ENCODE measurements at regions of chr15 and their contacts with region 1.

Region 1: GRCh38 chr15:51776952-51777574 is 25.7 kb downstream of the TMOD2 start:
- DNase-seq: peak; percentile 70
- CTCF ChIP-seq: peak; percentile 73

Region 2: DNA sequence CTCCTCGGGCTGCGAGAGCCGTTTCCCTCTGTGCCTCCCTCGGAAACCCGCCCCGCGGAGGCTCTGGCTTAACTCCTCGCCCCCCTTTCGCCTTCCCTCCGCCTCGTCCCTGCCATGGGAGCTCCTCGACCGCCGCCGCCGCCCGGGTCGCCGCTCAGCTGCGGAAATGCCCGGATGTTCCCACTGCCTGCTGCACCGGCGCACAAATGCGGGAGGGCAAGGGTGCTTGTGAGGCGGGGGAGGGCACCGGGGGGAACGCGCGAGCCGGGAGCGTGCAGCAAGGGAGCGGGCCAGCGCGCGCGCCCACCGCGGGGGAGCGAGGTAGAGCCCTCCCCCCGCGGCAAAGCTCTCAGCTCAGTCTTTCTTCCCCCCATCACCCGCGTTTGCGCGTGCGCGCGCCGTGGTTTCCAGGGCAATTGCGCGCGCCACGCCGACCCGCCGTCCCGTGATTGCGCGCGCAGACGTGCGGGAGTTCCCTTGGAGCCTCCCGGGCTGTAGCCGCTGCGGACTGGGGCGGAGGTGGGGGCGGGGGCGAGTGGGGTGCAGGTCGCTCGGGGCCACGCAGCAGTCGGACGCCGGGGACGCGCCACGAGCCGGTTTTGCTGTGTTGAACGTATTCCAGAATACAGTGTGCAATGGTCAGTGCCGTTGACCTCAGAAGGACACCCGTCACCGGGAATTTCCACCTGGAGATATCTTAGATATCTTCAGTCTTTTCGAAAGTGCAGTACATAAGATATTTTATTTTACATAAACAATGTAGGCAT is 154.3 kb before region 1 on chr15 and contains the start of gene DMXL2:
- CTCF ChIA-PET with region 1: interaction called, 18 read pairs
- POLR2A ChIA-PET with region 1: no interaction called
- DNase-seq: peak; percentile 79
- CTCF ChIP-seq: no peak

Region 3: GRCh38 chr15:51658670-51659069 is 118.4 kb before region 1 on chr15:
- CTCF ChIA-PET with region 1: interaction called, 45 read pairs
- POLR2A ChIA-PET with region 1: no interaction called
- DNase-seq: no peak
- CTCF ChIP-seq: no peak

Region 4: GRCh38 chr15:51681303-51681963 is 95.6 kb before region 1 on chr15 and contains the start of gene SCG3:
- CTCF ChIA-PET with region 1: interaction called, 13 read pairs
- POLR2A ChIA-PET with region 1: no interaction called
- DNase-seq: peak; percentile 55
- CTCF ChIP-seq: no peak

Region 5: DNA sequence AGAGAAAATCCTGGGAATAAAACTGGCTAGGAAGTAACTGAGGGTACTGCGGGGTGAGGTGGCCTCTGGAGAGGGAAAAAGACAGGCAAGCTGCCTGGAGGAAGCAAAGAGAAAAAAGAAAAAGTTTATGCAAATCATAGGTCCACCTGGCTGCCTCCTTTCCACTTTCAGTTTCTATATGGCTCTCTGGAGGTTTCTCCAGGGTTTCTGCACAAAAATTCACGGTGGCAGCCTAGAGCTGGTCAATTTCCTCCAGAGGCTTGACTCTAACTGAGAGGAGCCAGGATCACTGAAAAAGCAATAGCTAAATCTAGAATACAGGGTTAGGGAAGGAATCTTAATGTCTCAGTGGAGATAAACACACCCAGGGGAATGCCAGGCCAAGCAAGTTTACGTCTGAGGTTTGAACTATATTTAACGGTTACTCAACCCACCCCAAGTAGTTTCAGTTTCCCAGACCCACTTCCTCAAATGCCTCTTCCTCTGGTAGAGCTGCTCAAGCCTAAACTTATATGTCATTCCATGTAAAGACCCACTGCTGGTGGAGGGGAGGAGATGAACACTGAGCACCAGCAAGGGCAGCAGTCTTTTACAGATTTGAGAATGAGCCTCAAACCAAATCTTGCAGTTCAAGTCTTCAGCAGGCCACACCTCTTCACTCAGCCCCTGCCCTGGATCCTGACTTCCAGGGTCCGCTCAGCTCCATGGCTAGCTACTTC is 45.4 kb before region 1 on chr15:
- CTCF ChIA-PET with region 1: interaction called, 23 read pairs
- POLR2A ChIA-PET with region 1: no interaction called
- DNase-seq: peak; percentile 66
- CTCF ChIP-seq: no peak

Region 6: DNA sequence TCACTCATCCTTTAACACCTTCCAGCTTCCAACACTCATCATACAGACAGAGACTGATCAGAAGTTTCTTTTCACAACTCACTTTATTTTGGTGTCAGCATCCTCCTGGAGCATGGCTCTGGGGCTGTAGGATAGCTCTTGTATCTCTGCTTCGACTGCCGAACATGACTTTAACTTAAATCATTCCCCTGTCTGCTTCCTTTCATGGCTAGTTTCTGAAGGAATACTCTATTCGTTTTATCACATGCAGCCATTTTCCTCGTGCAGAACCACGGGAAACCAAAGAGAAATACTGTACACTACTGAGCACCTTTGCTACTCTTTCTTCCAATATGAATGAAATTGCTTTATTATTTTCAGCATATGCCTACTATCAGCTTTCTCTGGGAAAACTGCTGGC is 27.8 kb before region 1 on chr15:
- CTCF ChIA-PET with region 1: interaction called, 41 read pairs
- POLR2A ChIA-PET with region 1: no interaction called
- DNase-seq: no peak
- CTCF ChIP-seq: no peak

Region 7: DNA sequence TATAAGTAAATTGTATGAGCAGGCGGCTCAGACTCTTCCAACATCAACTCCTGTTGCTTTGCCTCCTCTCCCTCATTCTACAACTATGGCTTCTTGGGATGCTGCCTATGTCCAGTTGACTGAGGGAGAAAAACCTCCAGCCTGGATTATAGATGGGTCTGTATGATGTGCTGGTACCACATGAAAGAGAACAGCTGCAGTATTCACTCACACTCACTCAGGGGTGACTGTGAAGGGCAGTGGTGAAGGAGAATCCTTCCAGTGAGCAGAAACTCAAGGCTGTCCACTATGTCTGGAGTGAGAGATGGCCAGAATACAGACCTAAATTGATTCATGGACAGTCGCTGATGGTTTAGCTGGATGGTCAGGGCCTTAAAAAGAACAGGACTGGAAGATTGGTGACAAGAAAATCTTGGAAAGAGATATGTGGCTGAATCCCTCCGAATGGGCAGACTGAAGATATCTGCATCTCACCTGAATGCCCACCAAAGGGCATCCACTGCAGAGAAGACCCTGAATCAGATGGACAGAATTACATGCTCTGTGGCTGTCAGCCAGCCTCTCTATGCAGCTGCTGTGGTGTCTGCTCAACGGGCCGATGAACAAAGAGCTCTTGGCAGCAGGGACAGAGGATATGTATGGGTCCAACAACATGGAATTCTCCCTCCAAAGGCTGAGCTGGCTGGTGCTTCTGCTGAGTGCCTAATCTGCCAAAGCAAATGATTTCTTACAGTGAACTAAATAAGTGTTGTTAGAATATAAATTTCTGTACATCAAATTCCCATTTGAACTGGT is 337.4 kb after region 1 on chr15:
- CTCF ChIA-PET with region 1: no interaction called
- POLR2A ChIA-PET with region 1: no interaction called
- DNase-seq: no peak
- CTCF ChIP-seq: no peak